ENCODE measurements at regions of chr22 and their contacts with region 1.

Region 1: DNA sequence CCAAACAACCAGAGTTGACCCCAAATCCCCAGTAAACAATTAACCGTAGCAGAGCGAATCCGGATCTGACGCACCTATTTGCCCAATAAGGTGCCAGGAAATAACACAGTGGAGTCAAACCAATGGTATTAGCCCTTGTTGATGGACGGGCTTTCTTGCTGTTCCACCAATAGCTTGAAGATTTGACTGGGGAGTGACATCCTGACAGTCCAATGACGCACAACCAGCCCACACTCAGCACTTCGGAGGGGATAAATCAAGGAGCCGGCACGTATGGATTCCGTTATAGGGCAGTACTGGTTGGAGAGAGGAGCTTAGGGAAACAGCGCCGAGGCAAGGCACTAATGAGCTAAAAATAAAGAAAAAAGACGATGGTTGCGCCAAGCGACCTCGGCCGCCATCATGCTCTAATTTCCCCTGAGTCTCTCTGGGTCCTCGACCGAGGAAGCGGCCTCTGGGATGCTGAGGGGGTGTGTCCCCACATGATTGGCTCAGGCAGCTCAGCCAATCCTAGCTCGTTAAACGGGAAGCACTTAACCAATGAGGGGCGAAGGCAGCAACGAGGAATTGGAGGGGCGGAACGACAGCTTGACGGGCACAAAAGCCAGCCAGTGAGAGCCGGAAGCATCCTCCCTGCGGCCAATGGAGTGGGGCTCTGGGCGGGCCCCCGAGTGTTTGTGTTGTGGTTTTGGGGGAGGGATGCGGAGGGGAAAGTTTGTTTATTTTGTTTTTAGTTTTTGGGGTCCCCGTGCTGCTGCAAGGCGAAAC is 49.5 kb downstream of the FAM83F start:
- DNase-seq: peak; percentile 98
- H3K4me3 ChIP-seq: peak overlapping the region; percentile 68
- H3K27ac ChIP-seq: peak overlapping the region; percentile 93
- H3K4me1 ChIP-seq: peaks cover 6% of the 10 kb centered on the region
- H3K27me3 ChIP-seq: no peaks in the 10 kb centered on the region
- CTCF ChIP-seq: no peak

Region 2: GRCh38 chr22:40346178-40347118 is 302.2 kb after region 1 on chr22 and contains the start of gene ADSL:
- intact Hi-C with region 1: loop called (anchors 10 kb)
- DNase-seq: peak; percentile 93
- H3K4me3 ChIP-seq: peak within 1 kb of the TSS; percentile 60
- H3K27ac ChIP-seq: peak within 1 kb of the TSS; percentile 67
- H3K4me1 ChIP-seq: peaks cover 10% of the 10 kb centered on the region
- H3K27me3 ChIP-seq: no peaks in the 10 kb centered on the region
- CTCF ChIP-seq: no peak
- total RNA-seq, gene ADSL: 26.4 to 47.0 TPM